ENCODE measurements at regions of chr11 and their contacts with region 1.

Region 1: GRCh38 chr11:45859661-45860140 is 12.4 kb downstream of the CRY2 start:
- DNase-seq: no peak
- ATAC-seq: no peak
- H3K4me3 Mint-ChIP-seq: no peak overlapping the region
- H3K27ac Mint-ChIP-seq: no peak overlapping the region
- H3K4me1 Mint-ChIP-seq: no peaks in the 10 kb centered on the region
- H3K27me3 Mint-ChIP-seq: no peaks in the 10 kb centered on the region
- CTCF ChIP-seq: no peak

Region 2: GRCh38 chr11:45872513-45873356 is 13.0 kb after region 1 on chr11:
- CTCF ChIA-PET with region 1: interaction called, 15 read pairs
- POLR2A ChIA-PET with region 1: interaction called, 4 read pairs
- intact Hi-C with region 1: no loop called
- DNase-seq: peak; percentile 46
- ATAC-seq: peak; percentile 95
- H3K4me3 Mint-ChIP-seq: no peak overlapping the region
- H3K27ac Mint-ChIP-seq: no peak overlapping the region
- H3K4me1 Mint-ChIP-seq: no peaks in the 10 kb centered on the region
- H3K27me3 Mint-ChIP-seq: no peaks in the 10 kb centered on the region
- CTCF ChIP-seq: peak; percentile 54